GM18951 (cell line): ENCODE measurements at regions of chr2 and their contacts with region 1.

Region 1: DNA sequence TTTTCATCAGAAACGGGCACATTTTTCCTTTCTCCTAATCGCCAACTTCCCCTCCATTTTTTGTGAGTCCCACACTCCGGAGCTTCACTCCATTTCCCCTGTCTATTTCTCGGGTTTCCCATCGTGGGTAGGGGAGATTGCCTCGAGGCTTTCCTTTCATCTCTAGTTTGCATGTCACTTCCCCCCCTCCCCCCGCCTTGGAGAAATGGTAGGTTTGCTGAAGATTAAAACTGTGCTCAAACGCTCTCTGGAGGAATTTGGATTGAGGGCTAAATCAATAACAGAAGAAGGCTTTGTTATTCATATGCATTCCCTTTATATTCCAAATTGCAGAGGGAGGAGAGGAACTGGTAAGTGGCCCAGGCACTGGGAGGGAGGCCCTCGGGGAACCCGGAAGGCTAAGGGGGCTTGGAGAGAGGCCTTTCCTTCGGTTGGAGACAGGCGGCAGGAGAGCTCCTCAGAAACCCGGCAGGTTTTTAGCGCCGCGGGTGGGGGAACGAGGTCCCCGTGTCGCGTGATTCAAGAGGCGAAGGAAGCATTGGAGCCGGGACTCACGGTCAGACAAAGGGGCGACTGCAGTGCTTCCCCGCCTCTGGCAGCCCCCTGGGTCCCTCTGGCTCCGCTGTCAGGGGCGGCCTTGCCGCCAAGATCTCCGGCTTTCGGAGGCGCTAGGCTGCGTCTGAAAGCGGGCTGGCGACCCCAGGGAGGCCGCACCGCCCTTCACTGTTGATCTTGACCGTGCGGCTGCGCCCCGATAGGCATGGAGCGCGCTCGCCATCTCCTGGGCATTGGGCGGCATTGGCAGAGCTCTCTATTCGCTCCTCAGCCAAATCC is 2.4 kb upstream of the HOXD12 start:
- POLR2A ChIP-seq: no peak

Region 2: GRCh38 chr2:175366815-175367214 is 730.4 kb before region 1 on chr2:
- in situ Hi-C with region 1: loop called (anchors 10 kb)
- POLR2A ChIP-seq: no peak